IMR-90 (cell line): ENCODE measurements at regions of chr2 and their contacts with region 1.

Region 1: GRCh38 chr2:64554117-64554516 is 30.0 kb downstream of the AFTPH start:
- DNase-seq: no peak
- ATAC-seq: no peak
- H3K4me3 ChIP-seq: no peak overlapping the region
- H3K27ac ChIP-seq: no peak overlapping the region
- H3K4me1 ChIP-seq: no peaks in the 10 kb centered on the region
- H3K27me3 ChIP-seq: no peaks in the 10 kb centered on the region
- CTCF ChIP-seq: no peak
- POLR2A ChIP-seq: no peak
- RAD21 ChIP-seq: no peak

Region 2: GRCh38 chr2:64523666-64524603 is 30.2 kb before region 1 on chr2 and contains the start of gene AFTPH:
- CTCF ChIA-PET with region 1: no interaction called
- POLR2A ChIA-PET with region 1: no interaction called
- dilution Hi-C with region 1: no loop called
- in situ Hi-C with region 1: no loop called
- intact Hi-C with region 1: loop called (anchors 2 kb)
- DNase-seq: peak; percentile 98
- ATAC-seq: peak; percentile 98
- H3K4me3 ChIP-seq: peak within 1 kb of the TSS; percentile 87
- H3K27ac ChIP-seq: peak within 1 kb of the TSS; percentile 68
- H3K4me1 ChIP-seq: no peaks in the 10 kb centered on the region
- H3K27me3 ChIP-seq: peaks cover 5% of the 10 kb centered on the region
- CTCF ChIP-seq: no peak
- POLR2A ChIP-seq: peak; percentile 60
- RAD21 ChIP-seq: no peak
- total RNA-seq, gene AFTPH: 19.9 and 21.9 TPM in 2 replicates

Region 3: GRCh38 chr2:64952511-64953482 is 398.7 kb after region 1 on chr2:
- CTCF ChIA-PET with region 1: no interaction called
- POLR2A ChIA-PET with region 1: no interaction called
- dilution Hi-C with region 1: no loop called
- in situ Hi-C with region 1: no loop called
- intact Hi-C with region 1: no loop called
- DNase-seq: peak; percentile 96
- ATAC-seq: peak; percentile 92
- H3K4me3 ChIP-seq: no peak overlapping the region
- H3K27ac ChIP-seq: peak overlapping the region; percentile 56; the same call in 1 of the 2 replicates
- H3K4me1 ChIP-seq: peaks cover 18% of the 10 kb centered on the region
- H3K27me3 ChIP-seq: peaks cover 8% of the 10 kb centered on the region
- CTCF ChIP-seq: no peak
- POLR2A ChIP-seq: no peak
- RAD21 ChIP-seq: no peak